Right lobe of liver (tissue), 6 donors: ENCODE measurements at regions of chr9 and their contacts with region 1.

Region 1: GRCh38 chr9:134267881-134268724 is 58.2 kb upstream of the RXRA start:
- DNase-seq: peak; percentile 65 to 97 (median 96)
- ATAC-seq: peak; percentile 55 to 76 (median 70)
- H3K4me3 ChIP-seq: no peak overlapping the region
- H3K27ac ChIP-seq: peak overlapping the region in 2 of 3 donors; percentile 91 to 95
- H3K4me1 ChIP-seq: peaks cover 0 to 70% (median 33%) of the 10 kb centered on the region in 4 donors
- H3K27me3 ChIP-seq: no peaks in the 10 kb centered on the region
- CTCF ChIP-seq: no peak
- POLR2A ChIP-seq: peak; percentile 33

Region 2: GRCh38 chr9:134325817-134326723 is 58.0 kb after region 1 on chr9 and contains the start of gene RXRA:
- intact Hi-C with region 1: loop called (anchors 5 to 10 kb)
- DNase-seq: peak; percentile 94
- ATAC-seq: peak; percentile 20 to 45 (median 42)
- H3K4me3 ChIP-seq: peak within 1 kb of the TSS; percentile 86 to 94 (median 90)
- H3K27ac ChIP-seq: peak within 1 kb of the TSS; percentile 99
- H3K4me1 ChIP-seq: peaks cover 0 to 63% (median 25%) of the 10 kb centered on the region in 4 donors
- H3K27me3 ChIP-seq: no peaks in the 10 kb centered on the region
- CTCF ChIP-seq: peak in 2 of 4 donors; percentile 11 to 32
- POLR2A ChIP-seq: peak; percentile 96
- total RNA-seq, gene RXRA: 105 to 165 (median 131) TPM